KBM-7 (cell line): ENCODE measurements at regions of chr15 and their contacts with region 1.

Region 1: DNA sequence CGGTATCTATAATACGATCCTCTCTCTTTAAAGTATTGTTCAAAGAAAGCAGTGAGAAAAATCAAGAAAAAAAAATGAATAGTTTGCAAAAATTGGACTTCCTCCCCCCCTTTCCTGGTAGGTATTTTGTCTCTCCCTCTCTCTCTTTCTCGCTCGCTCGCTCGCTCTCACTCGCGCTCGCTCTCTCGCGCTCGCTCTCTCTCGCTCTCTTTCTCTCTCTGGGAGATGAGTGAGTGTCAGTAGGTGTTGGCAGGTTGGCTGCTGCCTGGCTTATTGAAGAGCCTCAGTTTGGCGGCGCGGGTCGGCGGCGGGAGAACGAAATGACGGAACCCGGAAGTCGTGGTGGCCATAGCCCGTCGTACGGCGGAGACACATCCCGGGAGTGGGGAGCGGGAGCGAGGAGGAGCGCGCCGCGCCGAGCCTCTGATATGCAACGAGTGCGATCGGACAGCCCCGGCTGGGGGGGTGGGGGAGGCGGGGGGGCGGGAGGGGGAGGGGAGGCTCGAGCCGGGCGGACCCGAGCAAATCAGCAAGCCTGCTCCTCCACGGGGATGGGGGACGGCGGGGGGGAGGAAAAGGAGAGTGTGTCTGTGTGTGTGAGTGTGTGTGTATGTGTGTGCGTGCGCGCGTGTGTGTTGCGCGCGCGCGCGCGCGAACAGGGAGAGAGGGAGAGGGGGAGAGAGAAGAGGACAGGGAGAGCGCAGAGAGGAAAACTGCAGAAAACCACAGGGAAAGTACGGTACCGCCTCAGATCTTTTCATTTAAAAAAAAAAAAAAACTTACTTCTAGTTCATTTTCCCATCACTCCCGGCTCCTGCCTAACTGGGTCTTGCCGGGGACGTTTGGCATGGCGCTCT is at the start of gene MEIS2:
- DNase-seq: peak; percentile 93

Region 2: GRCh38 chr15:36029606-36030210 is 1070.6 kb before region 1 on chr15:
- in situ Hi-C with region 1: no loop called
- DNase-seq: no peak

Region 3: DNA sequence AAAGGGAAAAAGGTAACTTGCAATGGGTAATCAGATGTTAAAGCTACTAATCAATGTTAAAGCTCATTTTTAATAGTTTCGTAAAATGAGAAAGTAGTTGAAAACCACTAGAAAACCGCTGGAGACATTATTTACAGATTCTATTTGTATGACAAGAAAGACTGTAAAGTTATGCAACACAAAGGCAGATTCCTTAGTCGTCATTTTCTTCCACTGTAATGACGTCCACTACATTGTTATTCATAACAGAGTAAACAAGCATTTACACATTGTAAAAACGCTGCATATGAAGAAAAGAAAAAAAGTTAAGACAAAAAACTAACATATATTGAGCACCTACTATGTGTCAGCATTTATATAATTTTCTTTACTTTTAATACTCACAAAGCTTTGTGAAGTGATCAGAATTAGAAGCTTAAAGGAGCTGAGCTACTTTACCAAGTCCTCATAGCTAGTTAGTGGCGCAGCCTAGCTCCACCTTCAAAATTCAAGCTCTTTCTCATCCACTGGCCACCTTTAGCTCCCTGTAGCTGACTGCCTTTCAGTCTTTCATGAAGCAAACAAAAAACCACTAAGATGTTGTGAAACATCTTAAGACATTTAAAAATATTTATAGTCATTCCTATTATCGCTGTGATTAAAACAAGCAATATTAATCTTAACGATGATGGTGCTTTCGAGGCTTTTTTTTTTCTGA is 621.0 kb before region 1 on chr15:
- in situ Hi-C with region 1: no loop called
- DNase-seq: no peak

Region 4: DNA sequence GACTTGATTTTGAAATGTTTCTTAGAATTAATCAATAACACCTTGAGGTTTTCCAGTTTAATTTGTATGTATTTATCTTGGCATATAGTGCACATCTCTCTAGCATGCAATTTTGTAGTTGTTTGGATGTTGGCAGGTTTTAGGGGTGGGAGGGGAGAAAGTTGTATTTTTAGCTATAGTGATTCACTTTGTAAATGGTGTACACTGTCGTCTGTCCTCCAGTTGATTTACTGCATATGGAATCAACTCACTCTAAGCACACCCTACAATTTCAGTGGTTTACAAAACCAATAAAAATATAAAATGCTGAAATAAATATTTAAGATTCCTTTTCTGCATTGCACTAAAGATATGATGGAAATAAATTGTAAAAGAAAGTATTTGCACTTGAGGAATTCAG is 321.8 kb before region 1 on chr15:
- in situ Hi-C with region 1: no loop called
- DNase-seq: no peak

Region 5: DNA sequence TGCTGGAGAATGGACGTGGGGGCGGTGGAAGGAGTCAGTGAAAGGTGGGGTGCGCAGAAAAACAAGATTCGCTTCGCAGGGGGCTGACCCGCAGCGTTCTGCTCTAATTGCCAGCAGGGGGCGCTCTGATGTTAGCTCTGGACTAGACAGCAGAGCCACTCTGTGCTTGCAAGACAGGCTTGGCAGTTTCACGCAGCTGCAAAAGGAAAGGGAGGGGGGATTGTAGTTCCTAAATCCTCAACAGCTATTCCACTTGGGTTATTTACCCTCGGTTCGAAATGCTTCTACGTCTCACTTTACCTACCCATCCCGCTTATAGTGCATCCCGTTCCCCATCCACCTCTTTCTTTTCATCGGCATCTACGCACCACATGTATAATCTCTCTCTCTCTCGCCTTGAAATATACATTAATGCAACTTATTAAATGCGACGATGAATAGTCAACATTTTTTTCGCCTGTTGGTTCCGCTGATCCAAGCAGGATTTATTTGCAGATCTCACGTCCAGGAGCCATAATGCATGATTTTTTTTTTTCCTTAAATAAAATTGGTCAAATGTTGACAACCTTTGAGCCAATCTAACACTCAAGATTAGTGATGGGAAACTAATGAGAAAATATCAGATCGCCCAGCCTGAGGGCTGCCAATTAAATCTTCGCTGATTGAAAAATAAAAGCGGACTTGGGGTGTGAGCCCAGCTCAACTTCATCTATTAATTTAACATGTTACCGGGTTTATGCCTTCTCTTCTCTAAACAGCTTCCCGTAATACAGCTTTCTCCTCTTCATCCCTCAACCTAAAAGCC is 216.4 kb before region 1 on chr15:
- in situ Hi-C with region 1: loop called (anchors 25 kb)
- DNase-seq: peak; percentile 75

Region 6: GRCh38 chr15:37837276-37837675 is 736.9 kb after region 1 on chr15:
- in situ Hi-C with region 1: no loop called
- DNase-seq: no peak